ENCODE measurements at regions of chr2 and their contacts with region 1.

Region 1: GRCh38 chr2:176653479-176654443 is 384.5 kb downstream of the MTX2 start:
- DNase-seq: peak; percentile 61
- H3K4me3 ChIP-seq: peak overlapping the region in 1 of 2 experiments; percentile 18; a peak in 1 of 4 replicates
- H3K27ac ChIP-seq: peak overlapping the region; percentile 25 to 80; a peak in 3 of 4 replicates
- H3K4me1 ChIP-seq: peaks cover 8 to 41% of the 10 kb centered on the region in 2 experiments; a peak in 3 of 4 replicates
- H3K27me3 ChIP-seq: no peaks in the 10 kb centered on the region
- CTCF ChIP-seq: peak; percentile 75
- EP300 ChIP-seq: no peak
- RAD21 ChIP-seq: peak; percentile 76

Region 2: DNA sequence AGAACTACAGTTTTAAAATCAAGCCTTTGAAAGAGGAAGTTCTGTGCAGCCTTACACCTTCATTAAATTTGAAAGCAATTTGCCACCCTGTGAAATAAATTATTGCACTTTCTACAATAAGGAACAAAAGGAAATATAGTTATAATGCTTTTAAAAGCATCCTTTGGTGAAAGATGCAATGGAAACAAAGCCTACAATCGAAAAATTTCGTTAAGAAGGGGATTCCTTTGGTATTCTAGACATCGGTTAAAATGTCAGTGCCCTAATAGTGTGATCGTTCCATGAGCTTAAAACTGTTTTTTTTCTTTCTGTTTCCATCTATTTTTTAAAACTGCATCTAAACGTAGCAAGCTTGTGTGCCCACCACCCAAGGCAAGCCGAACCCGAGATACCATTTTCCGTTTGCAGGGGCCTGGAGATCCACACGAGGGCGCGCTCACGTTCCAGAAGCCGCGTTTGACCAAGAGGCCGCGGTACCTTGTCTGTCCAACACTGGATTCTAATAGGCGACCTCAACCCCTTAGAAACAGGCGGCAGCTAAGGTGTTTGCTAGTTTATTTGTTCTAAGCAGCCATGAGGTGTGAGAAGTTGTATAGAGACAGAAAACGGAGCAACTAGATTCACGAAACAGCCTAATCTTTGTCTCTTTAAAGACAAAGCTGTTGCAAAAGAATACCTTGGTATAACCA is 542.6 kb before region 1 on chr2:
- CTCF ChIA-PET with region 1: interaction called, 132 read pairs
- POLR2A ChIA-PET with region 1: no interaction called
- DNase-seq: peak; percentile 88
- H3K4me3 ChIP-seq: peak overlapping the region in 1 of 2 experiments; percentile 19; a peak in 1 of 4 replicates
- H3K27ac ChIP-seq: no peak overlapping the region
- H3K4me1 ChIP-seq: peaks cover 0 to 4% of the 10 kb centered on the region in 2 experiments; a peak in 2 of 4 replicates
- H3K27me3 ChIP-seq: peaks cover 70% of the 10 kb centered on the region
- CTCF ChIP-seq: peak; percentile 90
- EP300 ChIP-seq: no peak
- RAD21 ChIP-seq: peak; percentile 65

Region 3: GRCh38 chr2:176574484-176575236 is 79.1 kb before region 1 on chr2:
- CTCF ChIA-PET with region 1: interaction called, 10 read pairs
- POLR2A ChIA-PET with region 1: no interaction called
- DNase-seq: peak; percentile 59
- H3K4me3 ChIP-seq: no peak overlapping the region; a peak in 1 of 4 replicates
- H3K27ac ChIP-seq: peak overlapping the region; percentile 39 to 99; a peak in 3 of 4 replicates
- H3K4me1 ChIP-seq: peaks cover 7 to 45% of the 10 kb centered on the region in 2 experiments
- H3K27me3 ChIP-seq: no peaks in the 10 kb centered on the region
- CTCF ChIP-seq: no peak
- EP300 ChIP-seq: peak; percentile 83 to 100
- RAD21 ChIP-seq: peak; percentile 42

Region 4: GRCh38 chr2:176675271-176675949 is 21.6 kb after region 1 on chr2:
- CTCF ChIA-PET with region 1: interaction called, 14 read pairs
- POLR2A ChIA-PET with region 1: no interaction called
- DNase-seq: no peak
- H3K4me3 ChIP-seq: no peak overlapping the region
- H3K27ac ChIP-seq: no peak overlapping the region
- H3K4me1 ChIP-seq: peaks cover 0 to 15% of the 10 kb centered on the region in 2 experiments; a peak in 2 of 4 replicates
- H3K27me3 ChIP-seq: no peaks in the 10 kb centered on the region
- CTCF ChIP-seq: no peak
- EP300 ChIP-seq: no peak
- RAD21 ChIP-seq: no peak

Region 5: DNA sequence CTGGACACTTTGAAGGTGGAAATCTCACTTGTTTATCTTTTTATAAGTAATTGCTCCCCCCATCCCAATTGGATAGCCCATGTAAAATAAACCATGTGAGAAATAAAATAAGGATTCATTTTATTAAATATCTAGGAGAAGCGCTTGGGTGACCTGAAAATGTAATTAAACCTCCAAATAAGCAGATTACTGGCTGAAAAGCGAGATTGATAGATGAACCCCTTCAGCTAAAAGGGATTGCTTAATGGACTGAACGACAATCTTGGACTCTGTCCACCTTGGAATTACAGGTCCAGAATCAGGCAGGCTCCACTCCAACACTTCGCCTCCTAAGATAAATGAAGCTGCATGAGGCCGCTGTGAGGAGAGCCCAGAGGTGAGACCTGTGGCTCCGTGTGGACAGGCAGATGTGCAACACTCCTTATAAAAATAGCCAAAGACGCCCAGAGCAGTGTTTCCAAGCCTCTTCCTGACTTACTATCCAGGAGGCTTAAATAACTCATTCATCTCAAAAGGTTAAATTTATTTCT is 57.0 kb after region 1 on chr2:
- CTCF ChIA-PET with region 1: interaction called, 18 read pairs
- POLR2A ChIA-PET with region 1: no interaction called
- DNase-seq: peak; percentile 4
- H3K4me3 ChIP-seq: no peak overlapping the region
- H3K27ac ChIP-seq: peak overlapping the region in 1 of 2 experiments; percentile 11; a peak in 2 of 4 replicates
- H3K4me1 ChIP-seq: peaks cover 13 to 15% of the 10 kb centered on the region in 2 experiments; a peak in 3 of 4 replicates
- H3K27me3 ChIP-seq: no peaks in the 10 kb centered on the region
- CTCF ChIP-seq: no peak
- EP300 ChIP-seq: no peak; a peak in 1 of 4 replicates
- RAD21 ChIP-seq: no peak

Measured in SK-N-SH (cell line).